MCF 10A (cell line): ENCODE measurements at regions of chr14 and their contacts with region 1.

Region 1: DNA sequence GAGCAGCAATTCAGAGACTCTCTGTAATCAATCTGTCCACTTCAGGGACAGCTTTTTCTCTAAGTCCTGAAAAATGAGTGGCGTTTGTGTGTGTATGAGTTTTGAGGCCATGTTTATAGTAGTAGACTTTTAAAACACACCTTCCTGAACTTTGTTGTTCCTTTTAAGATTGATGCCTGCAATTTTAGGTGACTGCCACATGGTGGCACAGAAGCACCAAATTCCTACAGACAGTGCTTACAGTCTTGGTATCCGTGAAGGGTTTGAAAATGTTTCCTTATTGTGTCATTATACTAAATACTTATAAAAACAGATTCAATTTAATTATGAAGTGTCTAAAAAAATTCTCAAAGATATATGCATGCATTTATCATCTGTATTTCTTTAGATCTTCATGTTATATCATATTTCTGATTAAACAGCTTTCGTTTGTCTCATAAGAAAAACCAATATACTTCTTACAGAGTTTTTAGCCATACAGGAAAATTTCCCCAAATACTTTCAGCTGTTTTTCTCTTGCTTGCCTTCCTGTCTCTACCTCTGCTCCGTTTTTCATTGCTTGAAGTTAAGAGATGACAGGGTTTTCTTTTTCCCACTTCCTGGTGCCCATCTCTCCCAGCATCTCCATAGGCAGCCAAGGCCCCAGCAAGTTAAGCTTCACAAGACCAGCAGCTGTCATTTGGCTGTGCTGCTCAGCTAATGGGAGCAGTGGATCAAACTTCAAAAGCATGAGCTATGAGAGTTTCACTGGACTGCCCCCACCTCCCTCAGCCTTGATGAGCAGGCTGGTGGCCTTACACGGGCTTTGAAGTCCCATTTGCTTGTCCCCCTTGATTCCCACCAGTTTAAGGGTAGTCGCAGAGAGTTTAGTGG is 259.6 kb downstream of the AKAP6 start:
- DNase-seq: peak; percentile 67
- H3K4me3 Mint-ChIP-seq: no peak overlapping the region
- H3K27ac Mint-ChIP-seq: no peak overlapping the region
- H3K4me1 Mint-ChIP-seq: peaks cover 9% of the 10 kb centered on the region
- H3K27me3 Mint-ChIP-seq: no peaks in the 10 kb centered on the region
- CTCF ChIP-seq: peak; percentile 84

Region 2: GRCh38 chr14:32397861-32398640 is 190.6 kb before region 1 on chr14:
- CTCF ChIA-PET with region 1: no interaction called
- POLR2A ChIA-PET with region 1: no interaction called
- intact Hi-C with region 1: no loop called
- DNase-seq: peak; percentile 92
- H3K4me3 Mint-ChIP-seq: no peak overlapping the region
- H3K27ac Mint-ChIP-seq: peak overlapping the region; percentile 76
- H3K4me1 Mint-ChIP-seq: peaks cover 7% of the 10 kb centered on the region
- H3K27me3 Mint-ChIP-seq: no peaks in the 10 kb centered on the region
- CTCF ChIP-seq: no peak

Region 3: GRCh38 chr14:32426586-32427388 is 161.9 kb before region 1 on chr14:
- CTCF ChIA-PET with region 1: no interaction called
- POLR2A ChIA-PET with region 1: no interaction called
- intact Hi-C with region 1: no loop called
- DNase-seq: no peak
- H3K4me3 Mint-ChIP-seq: no peak overlapping the region
- H3K27ac Mint-ChIP-seq: no peak overlapping the region
- H3K4me1 Mint-ChIP-seq: no peaks in the 10 kb centered on the region
- H3K27me3 Mint-ChIP-seq: no peaks in the 10 kb centered on the region
- CTCF ChIP-seq: no peak

Region 4: GRCh38 chr14:32939254-32940065 is 350.8 kb after region 1 on chr14:
- CTCF ChIA-PET with region 1: no interaction called
- POLR2A ChIA-PET with region 1: no interaction called
- intact Hi-C with region 1: loop called (anchors 10 kb)
- DNase-seq: peak; percentile 38
- H3K4me3 Mint-ChIP-seq: peak overlapping the region; percentile 83
- H3K27ac Mint-ChIP-seq: peak overlapping the region; percentile 31
- H3K4me1 Mint-ChIP-seq: peaks cover 6% of the 10 kb centered on the region
- H3K27me3 Mint-ChIP-seq: peaks cover 29% of the 10 kb centered on the region
- CTCF ChIP-seq: no peak

Region 5: GRCh38 chr14:33432407-33433023 is 843.8 kb after region 1 on chr14:
- CTCF ChIA-PET with region 1: interaction called, 4 read pairs
- POLR2A ChIA-PET with region 1: no interaction called
- intact Hi-C with region 1: loop called (anchors 1 kb)
- DNase-seq: peak; percentile 56
- H3K4me3 Mint-ChIP-seq: no peak overlapping the region
- H3K27ac Mint-ChIP-seq: no peak overlapping the region
- H3K4me1 Mint-ChIP-seq: peaks cover 13% of the 10 kb centered on the region
- H3K27me3 Mint-ChIP-seq: no peaks in the 10 kb centered on the region
- CTCF ChIP-seq: peak; percentile 53